A549 (cell line): ENCODE measurements at regions of chr17 and their contacts with region 1.

Region 1: DNA sequence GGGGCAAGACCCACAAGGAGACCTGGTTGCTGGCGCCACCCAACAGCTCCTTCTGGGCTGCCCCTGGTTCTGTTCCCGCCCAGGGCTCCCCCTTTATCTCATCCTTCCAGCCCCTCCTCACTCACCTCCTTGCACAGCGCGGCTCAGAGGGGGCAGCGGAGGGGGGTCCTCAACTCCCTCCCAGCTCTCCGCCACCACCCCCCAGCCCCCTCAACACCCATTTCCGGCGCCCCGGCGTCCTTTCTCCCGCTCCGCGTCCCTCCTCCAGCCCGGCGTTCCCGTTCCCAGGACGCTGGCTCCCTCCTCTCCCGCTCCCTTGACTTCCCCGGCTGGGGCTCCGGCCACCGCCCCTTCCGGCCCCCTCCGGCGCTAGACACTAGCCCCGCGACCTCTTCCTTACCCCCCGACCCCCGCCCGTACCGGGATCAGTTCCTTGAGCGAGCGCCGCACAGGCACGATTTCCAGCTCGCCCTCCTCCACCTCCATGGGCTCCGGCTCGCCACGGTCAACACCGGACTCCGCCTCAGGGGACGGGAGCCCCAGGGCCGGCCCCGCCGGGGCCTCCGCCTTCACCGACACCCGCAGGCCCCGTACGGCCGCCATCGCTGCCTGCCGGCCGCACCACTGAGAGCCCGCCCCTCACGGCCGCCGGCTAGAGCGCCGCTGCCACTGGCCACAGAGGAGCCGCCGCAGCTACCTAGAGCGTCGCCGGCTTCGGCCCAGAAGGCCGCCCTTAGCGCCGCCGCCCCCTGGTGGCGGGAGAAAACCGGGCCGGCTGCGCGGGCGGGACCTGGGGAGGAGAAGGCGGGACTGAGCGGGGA is at the start of gene NCBP3:
- DNase-seq: peak; percentile 97
- ATAC-seq: peak; percentile 92 to 98
- H3K4me3 ChIP-seq: peak within 1 kb of the TSS; percentile 93
- H3K27ac ChIP-seq: peak within 1 kb of the TSS; percentile 96 to 97
- H3K4me1 ChIP-seq: peaks cover 17% of the 10 kb centered on the region
- CTCF ChIP-seq: peak; percentile 95
- EP300 ChIP-seq: no peak
- POLR2A ChIP-seq: peak; percentile 92
- RAD21 ChIP-seq: peak; percentile 4 to 47; a peak in 3 of 5 replicates
- polyA plus RNA-seq, gene NCBP3: 27.7 and 32.7 TPM in 2 replicates

Region 2: GRCh38 chr17:3762922-3763776 is 82.7 kb before region 1 on chr17:
- CTCF ChIA-PET with region 1: interaction called, 10 read pairs
- POLR2A ChIA-PET with region 1: no interaction called
- DNase-seq: no peak
- ATAC-seq: no peak
- H3K4me3 ChIP-seq: no peak overlapping the region
- H3K27ac ChIP-seq: no peak overlapping the region
- H3K4me1 ChIP-seq: no peaks in the 10 kb centered on the region
- CTCF ChIP-seq: no peak
- EP300 ChIP-seq: no peak
- POLR2A ChIP-seq: no peak
- RAD21 ChIP-seq: no peak

Region 3: GRCh38 chr17:3827124-3827773 is 18.6 kb before region 1 on chr17:
- CTCF ChIA-PET with region 1: interaction called, 89 read pairs
- POLR2A ChIA-PET with region 1: interaction called, 3 read pairs
- DNase-seq: peak; percentile 75 to 86
- ATAC-seq: peak; percentile 86 to 88
- H3K4me3 ChIP-seq: no peak overlapping the region
- H3K27ac ChIP-seq: no peak overlapping the region
- H3K4me1 ChIP-seq: no peaks in the 10 kb centered on the region
- CTCF ChIP-seq: peak; percentile 87
- EP300 ChIP-seq: no peak
- POLR2A ChIP-seq: no peak
- RAD21 ChIP-seq: peak; percentile 81 to 88

Region 4: DNA sequence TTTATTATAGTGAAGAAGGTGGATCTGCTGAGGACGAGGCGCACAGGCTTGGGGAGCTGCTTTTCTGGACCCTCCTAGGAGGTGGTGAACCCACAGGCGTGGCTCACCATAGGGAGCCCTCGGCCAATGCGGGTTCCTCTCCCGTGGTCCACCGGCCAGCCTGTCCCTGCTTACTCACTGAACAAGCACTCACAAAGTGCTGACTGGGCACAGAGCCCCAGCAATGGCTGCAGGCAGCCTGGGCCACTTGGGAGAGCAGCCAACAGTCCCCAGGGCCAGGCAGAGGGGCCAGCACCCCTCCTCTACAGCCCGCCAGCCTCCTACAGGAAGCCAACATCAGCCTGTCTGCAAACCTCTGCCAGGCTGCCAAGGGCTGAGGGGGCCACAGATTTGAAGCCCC is 19.3 kb after region 1 on chr17:
- CTCF ChIA-PET with region 1: interaction called, 224 read pairs
- POLR2A ChIA-PET with region 1: no interaction called
- DNase-seq: no peak
- ATAC-seq: peak; percentile 42 to 57
- H3K4me3 ChIP-seq: no peak overlapping the region
- H3K27ac ChIP-seq: peak overlapping the region in 1 of 2 experiments; percentile 36; a peak in 3 of 6 replicates
- H3K4me1 ChIP-seq: peaks cover 9% of the 10 kb centered on the region; the same call in 2 of the 3 replicates
- CTCF ChIP-seq: no peak
- EP300 ChIP-seq: no peak
- POLR2A ChIP-seq: no peak
- RAD21 ChIP-seq: no peak

Region 5: DNA sequence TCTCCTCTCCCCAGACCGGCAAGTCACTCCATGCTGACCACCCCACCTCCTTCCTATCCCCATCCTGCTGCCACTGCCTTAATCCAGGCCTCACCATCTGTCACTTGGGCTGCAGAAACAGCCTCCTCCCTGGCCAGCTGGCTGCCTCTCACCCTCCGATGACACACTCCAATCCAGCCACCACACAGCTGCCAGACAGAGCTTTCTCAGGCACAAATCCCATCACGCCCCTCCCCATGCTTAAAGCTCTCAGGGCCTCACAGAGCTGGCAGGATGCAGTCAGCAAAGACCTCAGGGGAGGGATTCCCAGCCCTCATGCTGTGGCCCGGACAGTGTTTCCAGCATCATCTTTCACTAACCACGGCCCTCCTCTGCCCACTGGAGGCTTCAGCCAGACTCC is 33.4 kb after region 1 on chr17:
- CTCF ChIA-PET with region 1: interaction called, 11 read pairs
- POLR2A ChIA-PET with region 1: no interaction called
- DNase-seq: no peak
- ATAC-seq: peak in 1 of 2 experiments; percentile 12; a peak in 1 of 6 replicates
- H3K4me3 ChIP-seq: no peak overlapping the region
- H3K27ac ChIP-seq: no peak overlapping the region
- H3K4me1 ChIP-seq: no peaks in the 10 kb centered on the region
- CTCF ChIP-seq: no peak
- EP300 ChIP-seq: no peak
- POLR2A ChIP-seq: no peak
- RAD21 ChIP-seq: no peak

Region 6: GRCh38 chr17:3907483-3908216 is 61.8 kb after region 1 on chr17:
- CTCF ChIA-PET with region 1: interaction called, 72 read pairs
- POLR2A ChIA-PET with region 1: no interaction called
- DNase-seq: peak in 1 of 2 experiments; percentile 40
- ATAC-seq: peak; percentile 37 to 48; a peak in 4 of 6 replicates
- H3K4me3 ChIP-seq: no peak overlapping the region
- H3K27ac ChIP-seq: no peak overlapping the region
- H3K4me1 ChIP-seq: no peaks in the 10 kb centered on the region
- CTCF ChIP-seq: peak; percentile 52
- EP300 ChIP-seq: no peak
- POLR2A ChIP-seq: no peak
- RAD21 ChIP-seq: peak; percentile 72 to 83

Region 7: GRCh38 chr17:3993493-3994220 is 147.8 kb after region 1 on chr17:
- CTCF ChIA-PET with region 1: no interaction called
- POLR2A ChIA-PET with region 1: no interaction called
- DNase-seq: no peak
- ATAC-seq: peak in 1 of 2 experiments; percentile 39; a peak in 1 of 6 replicates
- H3K4me3 ChIP-seq: no peak overlapping the region
- H3K27ac ChIP-seq: no peak overlapping the region
- H3K4me1 ChIP-seq: no peaks in the 10 kb centered on the region
- CTCF ChIP-seq: no peak
- EP300 ChIP-seq: no peak
- POLR2A ChIP-seq: no peak
- RAD21 ChIP-seq: no peak